ENCODE measurements at regions of chr10 and their contacts with region 1.

Region 1: DNA sequence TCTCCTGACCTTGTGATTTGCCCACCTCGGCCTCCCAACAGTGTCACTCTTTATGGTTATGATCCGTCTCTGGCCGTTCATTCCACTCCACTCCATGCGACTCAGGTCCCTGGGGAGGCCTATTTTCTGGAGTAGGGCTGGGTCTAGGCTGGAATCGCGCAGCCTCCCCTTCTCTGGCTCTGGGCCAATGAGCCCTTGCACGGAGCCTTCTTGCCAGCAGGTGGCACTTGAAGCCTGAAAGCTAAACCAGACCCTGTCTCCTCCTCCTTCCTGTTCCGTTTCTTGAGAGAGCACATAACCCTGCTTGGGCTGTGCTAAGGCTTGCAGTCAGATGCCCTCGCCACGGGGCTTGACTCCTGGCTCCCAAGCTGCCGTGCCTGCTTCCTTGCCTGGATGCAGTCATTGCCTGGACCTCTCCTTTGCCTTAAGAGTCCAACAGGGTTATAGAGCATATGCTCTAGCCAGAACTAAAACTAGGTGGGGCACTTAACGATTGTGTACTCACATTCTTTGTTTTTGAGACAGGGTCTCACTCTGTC is 9.6 kb upstream of the DNAJB12 start:
- DNase-seq: peak; percentile 92
- ATAC-seq: peak; percentile 99
- H3K4me3 Mint-ChIP-seq: no peak overlapping the region
- H3K27ac Mint-ChIP-seq: peak overlapping the region; percentile 68
- H3K4me1 Mint-ChIP-seq: peaks cover 13% of the 10 kb centered on the region
- H3K27me3 Mint-ChIP-seq: no peaks in the 10 kb centered on the region

Region 2: DNA sequence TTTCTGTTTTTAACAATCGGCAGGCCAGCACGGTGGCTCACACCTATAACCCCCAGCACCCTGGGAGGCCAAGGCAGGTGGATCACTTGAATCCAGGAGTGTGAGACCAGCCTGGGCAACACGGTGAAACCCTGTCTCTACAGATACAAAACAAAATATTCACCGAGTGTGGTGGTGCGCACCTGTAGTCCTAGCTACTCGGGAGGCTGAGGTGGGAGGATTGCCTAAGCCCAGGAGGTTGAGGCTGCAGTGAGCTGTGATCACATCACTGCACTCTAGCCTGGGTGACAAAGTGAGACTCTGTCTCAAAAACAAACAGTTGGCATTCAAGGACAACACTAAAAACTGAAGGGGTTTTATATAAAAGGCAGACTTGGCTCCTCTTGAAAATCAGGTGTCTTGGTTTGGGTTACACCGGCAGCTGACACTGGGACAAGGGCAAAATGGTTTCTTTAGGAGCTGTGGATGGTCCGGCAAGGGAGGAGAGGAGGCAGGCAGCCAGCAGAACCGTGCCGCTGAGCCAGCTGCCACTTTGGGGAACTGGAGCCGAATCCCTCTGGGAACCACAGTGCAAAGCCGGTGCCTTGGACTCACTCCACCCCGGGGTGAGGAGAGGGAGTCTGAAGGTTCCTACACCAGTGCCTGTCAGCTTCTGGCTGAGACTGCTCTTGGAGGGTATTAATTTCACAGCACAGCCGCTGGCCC is 347.5 kb before region 1 on chr10:
- CTCF ChIA-PET with region 1: no interaction called
- POLR2A ChIA-PET with region 1: no interaction called
- intact Hi-C with region 1: no loop called
- DNase-seq: no peak
- ATAC-seq: no peak
- H3K4me3 Mint-ChIP-seq: no peak overlapping the region
- H3K27ac Mint-ChIP-seq: no peak overlapping the region
- H3K4me1 Mint-ChIP-seq: no peaks in the 10 kb centered on the region
- H3K27me3 Mint-ChIP-seq: no peaks in the 10 kb centered on the region

Region 3: DNA sequence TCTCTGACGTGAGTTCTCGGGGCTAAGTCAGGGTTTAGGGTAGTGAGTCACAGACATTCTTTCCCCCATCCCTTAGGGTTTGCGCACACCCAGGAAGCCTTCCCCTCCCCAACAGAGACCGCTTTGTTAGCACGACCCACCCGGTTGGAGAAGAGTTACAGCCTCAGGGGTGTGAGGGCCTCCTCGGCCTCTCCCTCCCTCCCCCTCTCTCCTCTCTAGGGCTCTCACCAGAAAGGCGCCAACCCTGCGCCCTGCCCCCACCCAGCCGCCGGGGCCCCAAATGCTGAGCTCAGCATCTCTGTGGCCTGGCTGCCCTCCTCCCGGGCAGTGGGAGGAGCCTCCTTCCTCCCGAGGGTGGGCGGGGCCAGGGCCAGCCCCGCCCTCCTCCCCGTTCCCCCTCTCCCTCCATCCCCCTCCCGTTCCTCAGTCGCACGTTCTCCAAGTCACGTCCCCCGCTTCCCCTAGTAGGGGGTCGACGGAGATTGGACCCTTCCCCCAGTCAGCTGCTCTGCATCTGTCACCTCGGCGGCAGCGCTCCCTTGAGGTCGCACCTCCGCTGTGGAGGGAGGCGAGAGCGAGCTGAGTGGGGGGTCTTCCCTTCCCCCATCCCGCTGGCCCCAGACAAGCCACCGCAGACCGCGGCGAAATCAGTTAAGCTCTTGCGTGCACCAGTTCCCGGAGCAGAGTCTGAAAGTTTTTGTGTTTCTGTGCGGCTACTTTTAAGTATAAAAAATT is 103.6 kb before region 1 on chr10:
- CTCF ChIA-PET with region 1: no interaction called
- POLR2A ChIA-PET with region 1: no interaction called
- intact Hi-C with region 1: no loop called
- DNase-seq: peak; percentile 97
- ATAC-seq: peak; percentile 75
- H3K4me3 Mint-ChIP-seq: peak overlapping the region; percentile 78
- H3K27ac Mint-ChIP-seq: peak overlapping the region; percentile 97
- H3K4me1 Mint-ChIP-seq: peaks cover 70% of the 10 kb centered on the region
- H3K27me3 Mint-ChIP-seq: no peaks in the 10 kb centered on the region

Region 4: GRCh38 chr10:72625608-72626443 is 261.5 kb after region 1 on chr10 and contains the start of gene MICU1:
- CTCF ChIA-PET with region 1: interaction called, 4 read pairs
- POLR2A ChIA-PET with region 1: no interaction called
- intact Hi-C with region 1: loop called (anchors 2 to 10 kb)
- DNase-seq: peak; percentile 98
- ATAC-seq: peak; percentile 99
- H3K4me3 Mint-ChIP-seq: peak within 1 kb of the TSS; percentile 94
- H3K27ac Mint-ChIP-seq: peak within 1 kb of the TSS; percentile 91
- H3K4me1 Mint-ChIP-seq: peaks cover 7% of the 10 kb centered on the region
- H3K27me3 Mint-ChIP-seq: no peaks in the 10 kb centered on the region
- total RNA-seq, gene MICU1: 41.0 to 51.5 TPM

Region 5: GRCh38 chr10:72834183-72834825 is 470.0 kb after region 1 on chr10:
- CTCF ChIA-PET with region 1: interaction called, 50 read pairs
- POLR2A ChIA-PET with region 1: no interaction called
- intact Hi-C with region 1: loop called (anchors 1 kb)
- DNase-seq: peak; percentile 52
- ATAC-seq: peak; percentile 58
- H3K4me3 Mint-ChIP-seq: no peak overlapping the region
- H3K27ac Mint-ChIP-seq: no peak overlapping the region
- H3K4me1 Mint-ChIP-seq: peaks cover 2% of the 10 kb centered on the region
- H3K27me3 Mint-ChIP-seq: no peaks in the 10 kb centered on the region

Region 6: GRCh38 chr10:72875250-72876055 is 511.1 kb after region 1 on chr10:
- CTCF ChIA-PET with region 1: interaction called, 8 read pairs
- POLR2A ChIA-PET with region 1: no interaction called
- intact Hi-C with region 1: loop called (anchors 1 kb)
- DNase-seq: no peak
- ATAC-seq: peak; percentile 39
- H3K4me3 Mint-ChIP-seq: no peak overlapping the region
- H3K27ac Mint-ChIP-seq: no peak overlapping the region
- H3K4me1 Mint-ChIP-seq: no peaks in the 10 kb centered on the region
- H3K27me3 Mint-ChIP-seq: no peaks in the 10 kb centered on the region

Region 7: DNA sequence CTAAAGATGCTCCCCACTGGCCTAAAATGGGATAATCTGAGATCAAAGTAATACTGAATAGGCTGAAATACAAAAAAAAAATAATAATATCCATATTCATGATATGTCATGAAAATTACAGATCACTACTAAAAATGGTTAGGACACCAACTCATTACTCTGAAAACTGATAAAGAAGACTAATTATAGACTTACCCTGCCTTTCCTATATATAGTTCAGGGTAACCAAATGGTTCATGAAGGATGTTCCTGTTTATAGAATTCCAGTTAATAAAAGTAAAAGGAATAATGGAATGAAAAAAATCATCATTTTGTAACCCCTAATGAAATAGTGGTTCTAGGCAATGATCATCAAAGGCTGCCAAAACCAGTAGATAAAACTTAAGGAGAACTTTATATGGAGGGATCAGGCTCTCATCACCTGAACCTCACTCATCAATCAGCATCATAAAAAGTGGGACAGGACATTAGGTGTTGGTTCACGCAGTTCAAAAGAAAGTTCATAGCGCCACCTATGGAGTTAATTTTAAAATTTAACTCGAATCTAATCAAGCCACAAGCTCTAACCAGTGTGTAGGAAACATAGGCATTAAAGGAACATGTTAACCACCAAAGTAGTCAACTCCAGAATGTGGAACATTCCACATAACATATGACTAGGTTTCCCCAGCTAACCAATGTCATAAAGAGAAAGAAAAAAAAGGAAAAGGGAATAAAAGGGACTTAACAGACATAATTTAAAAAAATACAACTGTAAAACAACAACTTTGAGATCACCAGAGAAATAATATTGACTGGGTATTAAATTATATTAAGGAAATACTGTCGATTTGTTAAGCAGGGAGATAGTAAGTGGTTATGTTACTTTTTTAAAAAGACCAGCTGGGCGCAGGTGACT is 696.7 kb after region 1 on chr10:
- CTCF ChIA-PET with region 1: no interaction called
- POLR2A ChIA-PET with region 1: no interaction called
- intact Hi-C with region 1: loop called (anchors 5 to 10 kb)
- DNase-seq: no peak
- ATAC-seq: peak; percentile 81
- H3K4me3 Mint-ChIP-seq: no peak overlapping the region
- H3K27ac Mint-ChIP-seq: no peak overlapping the region
- H3K4me1 Mint-ChIP-seq: peaks cover 17% of the 10 kb centered on the region
- H3K27me3 Mint-ChIP-seq: no peaks in the 10 kb centered on the region

Region 8: GRCh38 chr10:73159038-73159648 is 794.8 kb after region 1 on chr10:
- CTCF ChIA-PET with region 1: no interaction called
- POLR2A ChIA-PET with region 1: no interaction called
- intact Hi-C with region 1: loop called in 1 of 2 experiments (anchors 1 kb)
- DNase-seq: peak; percentile 74
- ATAC-seq: no peak
- H3K4me3 Mint-ChIP-seq: no peak overlapping the region
- H3K27ac Mint-ChIP-seq: no peak overlapping the region
- H3K4me1 Mint-ChIP-seq: peaks cover 36% of the 10 kb centered on the region
- H3K27me3 Mint-ChIP-seq: no peaks in the 10 kb centered on the region

Measured in activated CD4-positive, alpha-beta T cell treated with anti-CD3 and anti-CD28 coated beads for 36 hours (primary cell).